ENCODE measurements at regions of chr6 and their contacts with region 1.

Region 1: DNA sequence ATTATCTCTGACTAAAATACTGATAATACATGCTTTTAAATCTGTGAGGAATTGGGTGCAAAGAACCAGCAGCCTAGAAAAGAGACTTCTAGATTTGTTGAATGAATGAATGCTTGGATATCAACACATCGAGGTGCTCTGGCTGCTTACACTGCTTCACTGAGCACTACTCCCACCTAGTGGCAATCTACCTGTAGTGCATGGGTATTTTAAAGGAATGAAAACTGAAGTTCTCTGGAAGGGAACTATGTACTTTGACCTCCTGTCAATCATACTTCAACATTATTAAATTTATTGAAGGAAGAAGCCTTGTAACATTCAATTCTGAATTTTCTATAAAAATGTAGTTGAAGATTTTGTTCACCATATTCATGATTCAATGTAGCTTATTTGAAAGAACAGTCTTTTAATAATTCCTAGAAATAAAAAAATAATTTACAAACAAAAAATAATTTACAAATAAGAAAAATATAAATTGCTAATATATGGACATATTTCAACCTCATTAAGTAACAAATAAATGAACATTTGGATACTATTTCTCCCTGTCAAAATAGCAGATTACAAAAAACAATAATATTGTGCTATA is 111.2 kb upstream of the MMS22L start:
- DNase-seq: peak; percentile 40 to 71
- H3K4me3 ChIP-seq: no peak overlapping the region
- H3K4me3 Mint-ChIP-seq: no peak overlapping the region
- H3K27ac Mint-ChIP-seq: no peak overlapping the region
- H3K4me1 ChIP-seq: no peaks in the 10 kb centered on the region
- H3K4me1 Mint-ChIP-seq: no peaks in the 10 kb centered on the region
- H3K27me3 ChIP-seq: no peaks in the 10 kb centered on the region
- H3K27me3 Mint-ChIP-seq: peaks cover 6% of the 10 kb centered on the region
- CTCF ChIP-seq: peak; percentile 82 to 83

Region 2: GRCh38 chr6:97068211-97068610 is 326.0 kb before region 1 on chr6:
- CTCF ChIA-PET with region 1: no interaction called
- POLR2A ChIA-PET with region 1: no interaction called
- intact Hi-C with region 1: loop called (anchors 1 kb)
- DNase-seq: peak in 1 of 2 experiments; percentile 32
- H3K4me3 ChIP-seq: no peak overlapping the region
- H3K4me3 Mint-ChIP-seq: no peak overlapping the region
- H3K27ac Mint-ChIP-seq: no peak overlapping the region
- H3K4me1 ChIP-seq: no peaks in the 10 kb centered on the region
- H3K4me1 Mint-ChIP-seq: peaks cover 4% of the 10 kb centered on the region
- H3K27me3 ChIP-seq: no peaks in the 10 kb centered on the region
- H3K27me3 Mint-ChIP-seq: no peaks in the 10 kb centered on the region
- CTCF ChIP-seq: peak; percentile 49 to 57

Region 3: DNA sequence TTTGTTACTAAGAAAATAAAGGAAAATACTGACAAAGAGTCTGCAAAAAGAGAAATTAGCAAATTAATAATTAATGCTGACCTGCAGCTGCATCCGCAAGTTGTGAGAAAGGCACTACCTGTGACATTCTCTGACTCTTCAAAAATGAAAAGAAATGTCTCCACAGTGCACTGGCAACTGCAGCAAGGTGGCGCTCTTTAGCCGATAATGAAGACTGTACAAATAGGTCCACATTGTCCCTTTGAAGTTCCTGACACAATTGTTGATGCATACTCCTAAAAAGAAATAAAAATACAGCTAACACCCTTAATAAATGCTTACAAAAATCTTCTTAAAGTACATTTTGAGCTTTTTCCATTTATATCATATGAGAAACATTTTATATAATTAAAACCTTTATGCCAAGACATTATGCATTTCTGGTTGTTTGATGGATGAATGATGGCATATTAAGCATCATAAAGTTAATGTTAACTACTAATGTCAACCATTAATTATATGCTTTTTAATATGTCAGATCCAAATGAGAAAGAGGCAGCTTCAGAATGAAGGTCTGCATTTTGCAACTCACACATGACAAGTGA is 207.7 kb before region 1 on chr6:
- CTCF ChIA-PET with region 1: no interaction called
- POLR2A ChIA-PET with region 1: no interaction called
- intact Hi-C with region 1: loop called (anchors 1 kb)
- DNase-seq: peak; percentile 65 to 73
- H3K4me3 ChIP-seq: no peak overlapping the region
- H3K4me3 Mint-ChIP-seq: no peak overlapping the region
- H3K27ac Mint-ChIP-seq: no peak overlapping the region
- H3K4me1 ChIP-seq: no peaks in the 10 kb centered on the region
- H3K4me1 Mint-ChIP-seq: no peaks in the 10 kb centered on the region
- H3K27me3 ChIP-seq: no peaks in the 10 kb centered on the region
- H3K27me3 Mint-ChIP-seq: no peaks in the 10 kb centered on the region
- CTCF ChIP-seq: peak; percentile 77 to 81

Region 4: GRCh38 chr6:97215157-97215769 is 179.0 kb before region 1 on chr6:
- CTCF ChIA-PET with region 1: no interaction called
- POLR2A ChIA-PET with region 1: no interaction called
- intact Hi-C with region 1: loop called (anchors 1 kb)
- DNase-seq: peak in 1 of 2 experiments; percentile 33
- H3K4me3 ChIP-seq: no peak overlapping the region
- H3K4me3 Mint-ChIP-seq: no peak overlapping the region
- H3K27ac Mint-ChIP-seq: no peak overlapping the region
- H3K4me1 ChIP-seq: no peaks in the 10 kb centered on the region; the same call in 1 of the 2 replicates
- H3K4me1 Mint-ChIP-seq: no peaks in the 10 kb centered on the region
- H3K27me3 ChIP-seq: no peaks in the 10 kb centered on the region
- H3K27me3 Mint-ChIP-seq: no peaks in the 10 kb centered on the region
- CTCF ChIP-seq: peak; percentile 30 to 66

Region 5: DNA sequence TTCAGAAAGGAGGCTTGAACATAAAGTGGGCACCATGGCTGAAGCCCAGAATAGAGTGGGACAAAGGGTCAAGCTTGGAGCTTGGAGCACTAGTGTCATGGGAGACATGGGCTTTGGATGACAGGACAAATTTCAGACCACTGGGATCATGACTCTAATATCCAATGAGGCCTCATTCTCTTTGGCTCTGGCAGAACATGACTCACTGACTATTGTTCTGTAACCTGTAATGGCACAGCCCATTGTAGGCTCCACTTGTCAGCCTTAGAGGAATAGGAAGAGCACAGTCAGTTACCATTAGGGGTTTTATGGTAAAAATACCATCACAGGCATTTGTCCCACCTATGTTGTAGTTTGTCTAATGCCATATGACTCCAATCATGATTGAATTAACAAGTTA is 77.3 kb before region 1 on chr6:
- CTCF ChIA-PET with region 1: no interaction called
- POLR2A ChIA-PET with region 1: no interaction called
- intact Hi-C with region 1: no loop called
- DNase-seq: no peak
- H3K4me3 ChIP-seq: no peak overlapping the region
- H3K4me3 Mint-ChIP-seq: no peak overlapping the region
- H3K27ac Mint-ChIP-seq: no peak overlapping the region
- H3K4me1 ChIP-seq: no peaks in the 10 kb centered on the region
- H3K4me1 Mint-ChIP-seq: no peaks in the 10 kb centered on the region
- H3K27me3 ChIP-seq: no peaks in the 10 kb centered on the region
- H3K27me3 Mint-ChIP-seq: no peaks in the 10 kb centered on the region
- CTCF ChIP-seq: no peak

Region 6: DNA sequence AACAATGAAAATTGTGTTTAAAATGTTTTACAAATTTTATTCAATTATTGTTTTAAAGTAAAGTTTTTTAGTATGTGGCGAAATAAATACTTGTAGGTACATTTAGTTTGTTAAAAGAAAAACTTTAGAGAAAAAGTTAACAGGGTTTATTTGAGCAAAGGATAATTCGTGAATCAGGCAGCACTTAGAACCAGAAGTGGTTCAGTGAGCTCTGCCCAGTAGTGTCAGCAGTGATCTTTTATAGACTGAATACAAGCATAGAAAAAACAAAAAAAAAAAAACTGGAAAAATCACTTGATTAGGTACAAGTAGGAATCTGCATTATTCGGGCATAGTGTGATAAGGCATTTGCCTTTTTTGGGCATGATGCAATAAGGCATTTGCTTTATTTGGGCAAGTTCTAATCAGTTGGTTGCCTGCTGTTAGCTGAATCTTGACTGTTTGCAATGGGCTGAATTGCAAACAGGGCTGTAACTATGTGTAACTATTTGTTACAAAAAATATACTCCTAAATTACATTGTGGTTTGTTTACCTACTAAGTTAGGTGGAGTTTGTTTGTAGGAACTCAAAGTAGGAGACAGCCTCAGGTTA is 11.7 kb after region 1 on chr6:
- CTCF ChIA-PET with region 1: no interaction called
- POLR2A ChIA-PET with region 1: no interaction called
- intact Hi-C with region 1: no loop called
- DNase-seq: no peak
- H3K4me3 ChIP-seq: no peak overlapping the region
- H3K4me3 Mint-ChIP-seq: no peak overlapping the region
- H3K27ac Mint-ChIP-seq: no peak overlapping the region
- H3K4me1 ChIP-seq: 0 out of 2 replicates have a peak, but pooled peaks cover 3% of the 10 kb centered on the region
- H3K4me1 Mint-ChIP-seq: peaks cover 7% of the 10 kb centered on the region
- H3K27me3 ChIP-seq: no peaks in the 10 kb centered on the region
- H3K27me3 Mint-ChIP-seq: no peaks in the 10 kb centered on the region
- CTCF ChIP-seq: no peak

Region 7: GRCh38 chr6:97450087-97450486 is 55.8 kb after region 1 on chr6:
- CTCF ChIA-PET with region 1: no interaction called
- POLR2A ChIA-PET with region 1: no interaction called
- intact Hi-C with region 1: no loop called
- DNase-seq: no peak
- H3K4me3 ChIP-seq: no peak overlapping the region
- H3K4me3 Mint-ChIP-seq: no peak overlapping the region
- H3K27ac Mint-ChIP-seq: no peak overlapping the region
- H3K4me1 ChIP-seq: no peaks in the 10 kb centered on the region
- H3K4me1 Mint-ChIP-seq: no peaks in the 10 kb centered on the region
- H3K27me3 ChIP-seq: no peaks in the 10 kb centered on the region
- H3K27me3 Mint-ChIP-seq: peaks cover 2% of the 10 kb centered on the region
- CTCF ChIP-seq: no peak